B cell (primary cell): ENCODE measurements at regions of chr1 and their contacts with region 1.

Region 1: DNA sequence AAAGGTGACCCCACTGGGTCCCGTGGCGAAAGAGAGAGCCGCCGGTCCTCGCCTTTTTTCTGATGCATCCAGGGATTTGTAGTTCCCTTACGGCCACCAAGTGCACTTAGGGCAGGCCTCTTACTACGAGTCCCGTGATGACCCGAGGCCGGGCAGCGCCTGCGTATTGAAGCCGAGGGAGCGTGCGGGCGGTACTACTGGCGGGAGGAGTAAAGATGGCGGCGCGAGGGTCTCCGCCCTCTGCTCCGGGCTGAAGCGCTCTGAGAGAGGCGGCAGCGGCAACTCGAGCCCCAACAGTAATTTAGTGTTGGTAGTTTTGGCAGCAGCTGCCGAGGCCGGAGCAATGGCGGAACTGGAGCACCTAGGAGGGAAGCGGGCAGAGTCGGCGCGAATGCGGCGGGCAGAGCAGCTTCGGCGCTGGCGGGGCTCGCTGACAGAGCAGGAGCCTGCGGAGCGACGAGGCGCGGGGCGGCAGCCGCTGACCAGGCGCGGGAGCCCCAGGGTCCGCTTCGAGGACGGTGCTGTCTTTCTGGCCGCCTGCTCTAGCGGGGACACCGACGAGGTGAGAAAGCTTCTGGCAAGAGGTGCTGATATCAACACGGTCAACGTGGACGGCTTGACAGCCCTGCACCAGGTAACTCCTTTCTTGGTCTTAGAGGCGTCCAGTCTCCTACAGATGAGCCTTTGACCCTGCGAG is at the start of gene PPP1R12B:
- DNase-seq: peak; percentile 97
- ATAC-seq: peak; percentile 94
- H3K4me3 ChIP-seq: peak within 1 kb of the TSS; percentile 74 to 97 (median 89)
- H3K4me3 Mint-ChIP-seq: peak within 1 kb of the TSS; percentile 91
- H3K27ac ChIP-seq: peak within 1 kb of the TSS; percentile 3 to 79
- H3K27ac Mint-ChIP-seq: peak within 1 kb of the TSS; percentile 90
- H3K4me1 ChIP-seq: peaks cover 11 to 12% of the 10 kb centered on the region in 2 donors
- H3K4me1 Mint-ChIP-seq: peaks cover 29% of the 10 kb centered on the region
- H3K27me3 ChIP-seq: no peaks in the 10 kb centered on the region
- H3K27me3 Mint-ChIP-seq: no peaks in the 10 kb centered on the region
- CTCF ChIP-seq: no peak
- total RNA-seq, gene PPP1R12B: 36.8 and 49.6 TPM in 2 replicates

Region 2: DNA sequence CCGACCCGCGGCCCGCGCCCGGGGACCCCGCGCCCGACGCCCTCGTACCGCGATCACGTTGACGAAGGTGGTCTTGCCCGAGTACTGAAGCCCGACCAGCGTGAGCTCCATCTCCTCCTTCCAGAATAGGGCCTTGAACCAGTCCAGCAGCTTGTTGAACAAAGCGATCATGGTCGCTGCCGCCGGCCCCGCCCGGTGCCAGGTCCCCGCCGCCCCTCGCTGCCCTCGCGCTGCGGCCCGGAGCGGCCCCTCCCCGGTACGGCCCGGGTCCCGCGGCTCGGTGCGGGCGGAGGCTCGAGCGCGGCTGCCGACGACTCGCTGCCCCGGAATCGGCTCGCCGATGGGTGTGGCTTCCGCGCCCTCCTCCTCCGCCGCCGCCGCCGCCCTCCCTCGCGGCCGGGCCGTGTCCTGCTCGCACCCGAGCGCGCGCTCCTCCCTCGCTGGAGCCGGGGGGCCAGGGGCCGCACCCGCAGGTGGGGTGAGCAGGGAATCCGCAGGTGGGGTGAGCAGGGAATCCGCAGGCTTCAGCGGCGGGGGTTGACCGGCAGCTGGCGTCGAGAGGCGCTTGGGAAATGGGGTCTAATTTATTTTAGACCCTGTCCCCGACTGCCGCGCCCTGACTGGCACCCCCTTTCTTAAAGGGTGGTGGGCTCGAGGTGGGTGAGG is 204.1 kb before region 1 on chr1 and contains the start of gene ARL8A:
- CTCF ChIA-PET with region 1: no interaction called
- POLR2A ChIA-PET with region 1: no interaction called
- intact Hi-C with region 1: loop called (anchors 2 kb)
- DNase-seq: peak; percentile 78
- ATAC-seq: peak; percentile 74
- H3K4me3 ChIP-seq: peak within 1 kb of the TSS; percentile 74 to 92 (median 88)
- H3K4me3 Mint-ChIP-seq: peak within 1 kb of the TSS; percentile 93
- H3K27ac ChIP-seq: peak within 1 kb of the TSS; percentile 65 to 90
- H3K27ac Mint-ChIP-seq: peak within 1 kb of the TSS; percentile 95
- H3K4me1 ChIP-seq: peaks cover 30 to 43% of the 10 kb centered on the region in 2 donors
- H3K4me1 Mint-ChIP-seq: peaks cover 47% of the 10 kb centered on the region
- H3K27me3 ChIP-seq: no peaks in the 10 kb centered on the region
- H3K27me3 Mint-ChIP-seq: no peaks in the 10 kb centered on the region
- CTCF ChIP-seq: no peak
- total RNA-seq, gene ARL8A: 66.8 and 70.7 TPM in 2 replicates

Region 3: DNA sequence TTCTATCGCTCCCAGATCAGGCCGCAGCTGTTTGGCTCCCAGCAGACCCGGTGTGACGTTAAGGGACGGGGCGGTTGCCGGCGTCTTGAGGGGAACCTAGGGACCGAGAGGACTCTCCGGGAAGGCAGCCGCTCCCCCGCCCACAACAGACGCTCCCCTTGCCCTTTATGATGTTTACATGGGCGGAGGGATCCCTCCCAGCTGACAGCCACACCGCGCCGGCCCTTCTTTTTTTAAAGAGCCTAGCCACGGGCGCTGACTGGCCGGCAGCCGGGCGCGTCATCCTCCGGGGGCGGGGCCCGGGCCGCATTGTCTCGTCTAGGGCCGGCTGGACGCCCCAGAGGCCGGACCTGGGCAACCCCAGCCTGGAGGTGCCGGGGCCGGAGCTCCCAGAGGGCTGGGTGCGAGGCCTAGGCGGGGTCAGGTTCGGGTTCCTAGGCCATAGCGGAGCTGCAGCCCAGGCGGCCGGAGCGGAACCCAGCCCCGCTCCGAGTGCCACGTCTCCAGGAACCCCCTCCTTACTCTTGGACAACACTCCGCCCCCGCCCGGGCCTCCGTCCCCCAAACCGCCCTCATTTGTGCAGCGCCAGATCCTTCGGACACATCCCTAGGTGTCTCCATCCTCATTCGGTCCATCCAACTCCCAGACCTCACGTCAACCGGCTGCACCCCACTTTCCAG is 462.1 kb after region 1 on chr1 and contains the start of gene PCAT6:
- CTCF ChIA-PET with region 1: no interaction called
- POLR2A ChIA-PET with region 1: no interaction called
- intact Hi-C with region 1: loop called (anchors 2 kb)
- DNase-seq: peak; percentile 93
- ATAC-seq: peak; percentile 81
- H3K4me3 ChIP-seq: peak within 1 kb of the TSS; percentile 72 to 91 (median 86)
- H3K4me3 Mint-ChIP-seq: peak within 1 kb of the TSS; percentile 87
- H3K27ac ChIP-seq: peak within 1 kb of the TSS; percentile 35 to 69
- H3K27ac Mint-ChIP-seq: peak within 1 kb of the TSS; percentile 91
- H3K4me1 ChIP-seq: peaks cover 23 to 33% of the 10 kb centered on the region in 2 donors
- H3K4me1 Mint-ChIP-seq: peaks cover 32% of the 10 kb centered on the region
- H3K27me3 ChIP-seq: peaks cover 0 to 15% (median 2%) of the 10 kb centered on the region in 4 experiments
- H3K27me3 Mint-ChIP-seq: peaks cover 6% of the 10 kb centered on the region
- CTCF ChIP-seq: no peak
- total RNA-seq, gene PCAT6: 1.6 TPM in 1 of 2 replicates, not detected in the other

Region 4: GRCh38 chr1:202957733-202958543 is 609.3 kb after region 1 on chr1 and contains the start of gene ADIPOR1:
- CTCF ChIA-PET with region 1: no interaction called
- POLR2A ChIA-PET with region 1: no interaction called
- intact Hi-C with region 1: loop called (anchors 1 kb)
- DNase-seq: peak; percentile 92
- ATAC-seq: peak; percentile 98
- H3K4me3 ChIP-seq: peak within 1 kb of the TSS; percentile 79 to 93 (median 87)
- H3K4me3 Mint-ChIP-seq: peak within 1 kb of the TSS; percentile 90
- H3K27ac ChIP-seq: peak within 1 kb of the TSS; percentile 79 to 95
- H3K27ac Mint-ChIP-seq: peak within 1 kb of the TSS; percentile 86
- H3K4me1 ChIP-seq: peaks cover 25 to 27% of the 10 kb centered on the region in 2 donors
- H3K4me1 Mint-ChIP-seq: peaks cover 40% of the 10 kb centered on the region
- H3K27me3 ChIP-seq: no peaks in the 10 kb centered on the region
- H3K27me3 Mint-ChIP-seq: no peaks in the 10 kb centered on the region
- CTCF ChIP-seq: no peak
- total RNA-seq, gene ADIPOR1: 44.2 and 46.6 TPM in 2 replicates